Breast epithelium (tissue), 4 donors: ENCODE measurements at regions of chr10 and their contacts with region 1.

Region 1: DNA sequence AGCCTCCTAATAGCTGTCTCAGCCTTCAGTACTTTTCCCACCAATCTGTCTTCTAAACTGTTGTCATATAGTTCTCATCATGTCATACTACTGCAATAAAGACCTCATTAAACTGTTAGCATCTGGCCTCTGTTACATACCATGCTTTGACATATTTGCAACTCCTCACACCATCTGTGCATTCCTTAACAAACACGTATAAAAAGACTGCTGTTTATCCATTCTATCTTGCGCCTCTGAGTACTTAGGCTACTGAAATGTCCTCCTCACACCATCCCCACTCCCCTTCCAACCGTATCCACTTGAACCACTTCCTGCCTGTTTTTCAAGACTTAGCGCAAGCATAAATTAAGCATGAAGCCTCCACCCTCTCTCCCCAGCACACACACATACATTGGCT is 41.6 kb downstream of the SLC16A9 start:
- DNase-seq: no peak
- H3K4me3 ChIP-seq: no peak overlapping the region
- H3K27ac ChIP-seq: no peak overlapping the region
- H3K4me1 ChIP-seq: no peaks in the 10 kb centered on the region
- H3K27me3 ChIP-seq: no peaks in the 10 kb centered on the region
- CTCF ChIP-seq: no peak
- POLR2A ChIP-seq: no peak

Region 2: DNA sequence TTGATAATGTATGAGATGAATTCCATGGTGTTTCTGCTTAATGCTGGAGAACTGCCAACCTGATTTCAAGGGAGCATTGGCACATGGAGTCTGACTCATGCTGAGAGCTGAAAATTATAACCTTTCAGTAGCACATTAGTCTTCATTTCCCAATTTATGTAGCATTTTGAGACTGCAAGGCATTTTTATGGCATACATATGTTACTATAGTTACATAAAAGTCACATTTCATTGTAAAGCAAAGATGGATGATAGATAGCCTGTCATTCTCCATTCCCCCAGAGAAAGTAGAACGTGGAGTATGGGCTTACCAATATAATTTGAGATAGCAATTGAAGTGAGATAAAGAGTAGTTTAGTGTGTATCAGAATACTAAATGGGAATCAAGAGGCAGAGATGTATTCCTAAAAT is 61.5 kb before region 1 on chr10:
- intact Hi-C with region 1: no loop called
- DNase-seq: no peak
- H3K4me3 ChIP-seq: no peak overlapping the region
- H3K27ac ChIP-seq: no peak overlapping the region
- H3K4me1 ChIP-seq: no peaks in the 10 kb centered on the region
- H3K27me3 ChIP-seq: no peaks in the 10 kb centered on the region
- CTCF ChIP-seq: no peak
- POLR2A ChIP-seq: no peak

Region 3: DNA sequence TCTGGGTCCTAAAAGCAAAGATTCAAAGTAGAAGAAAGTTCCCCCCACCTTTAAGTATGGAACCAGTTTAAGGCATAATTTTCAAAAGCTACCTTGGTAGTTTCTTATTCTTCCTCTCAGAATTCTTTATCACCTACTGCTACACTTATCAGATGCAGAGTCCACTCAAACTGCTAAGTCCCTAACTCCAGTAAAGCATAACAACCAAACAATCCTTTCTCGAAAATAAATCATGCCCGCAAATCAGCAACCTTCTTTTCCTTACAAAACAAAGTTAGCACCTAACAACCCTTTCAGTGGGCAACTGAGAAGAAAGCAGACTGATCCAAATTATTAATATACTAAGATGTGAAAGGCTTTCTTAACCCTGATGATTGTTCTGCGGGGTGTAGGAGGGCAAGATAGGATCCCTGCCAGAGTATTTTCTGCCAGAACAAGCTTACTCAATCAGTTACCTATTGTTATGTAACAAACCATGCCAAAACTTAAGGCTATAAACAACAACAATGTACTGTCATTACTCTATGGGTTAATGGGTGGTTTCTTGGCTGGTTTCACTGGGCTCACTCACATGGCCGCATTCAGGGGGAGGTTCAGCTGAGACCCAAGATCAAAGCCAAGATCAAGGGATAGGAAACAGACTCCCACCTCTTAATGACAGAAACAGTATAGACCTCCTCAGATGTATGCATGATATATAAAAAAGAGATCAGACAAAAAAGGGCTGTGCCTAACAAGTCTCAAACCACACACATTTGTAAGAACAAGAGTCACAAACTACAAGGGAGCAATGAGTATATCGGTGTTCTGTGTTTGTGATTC is 196.3 kb after region 1 on chr10:
- intact Hi-C with region 1: loop called (anchors 5 kb)
- DNase-seq: no peak
- H3K4me3 ChIP-seq: no peak overlapping the region
- H3K27ac ChIP-seq: peak overlapping the region; percentile 35 to 64
- H3K4me1 ChIP-seq: peaks cover 0 to 9% of the 10 kb centered on the region in 2 donors
- H3K27me3 ChIP-seq: no peaks in the 10 kb centered on the region
- CTCF ChIP-seq: no peak
- POLR2A ChIP-seq: no peak